ENCODE measurements at regions of chr1 and their contacts with region 1.

Region 1: DNA sequence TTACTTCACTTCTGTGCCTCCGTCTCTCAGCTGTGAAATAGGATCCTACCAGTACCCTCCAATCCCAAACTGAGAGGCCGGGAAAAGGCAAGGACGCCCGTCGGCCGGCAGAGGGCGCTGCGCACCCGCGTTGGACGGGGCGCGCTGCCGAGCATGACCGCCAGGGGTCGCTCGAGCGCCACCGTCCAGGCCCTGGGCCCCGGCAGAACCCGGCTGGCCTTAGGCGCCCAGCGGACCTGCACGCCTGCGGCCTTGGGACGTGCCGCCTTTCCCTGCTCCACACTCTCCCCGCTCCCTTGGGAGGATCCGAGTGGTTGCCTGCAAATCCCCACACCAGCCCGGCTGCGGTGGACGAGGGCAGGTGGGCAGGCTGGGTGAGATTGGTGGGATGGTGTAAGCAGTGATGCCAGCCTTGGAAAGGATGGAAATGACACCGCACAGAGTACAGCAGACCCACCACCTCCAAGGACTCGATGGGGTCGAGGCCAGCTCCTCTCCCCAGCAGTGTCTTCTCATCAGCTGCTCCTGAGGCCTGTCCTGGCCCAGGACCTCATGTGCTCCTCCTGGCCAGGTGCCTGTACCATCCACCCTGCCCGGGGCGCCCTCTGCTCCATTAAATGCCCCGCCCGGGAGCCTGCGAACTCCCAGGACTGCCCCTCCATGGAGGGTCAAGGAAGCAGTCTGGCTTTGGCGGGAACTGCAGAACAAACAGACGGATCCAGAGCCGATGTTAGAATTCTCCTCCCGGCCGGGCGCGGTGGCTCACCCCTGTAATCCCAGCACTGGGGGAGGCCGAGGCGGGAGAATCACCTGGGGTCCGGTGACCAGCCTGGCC is 47.4 kb upstream of the LBR start:
- DNase-seq: peak; percentile 81 to 85
- ATAC-seq: peak; percentile 92 to 96 (median 93)
- H3K4me3 ChIP-seq: no peak overlapping the region
- H3K4me3 Mint-ChIP-seq: no peak overlapping the region
- H3K27ac ChIP-seq: no peak overlapping the region
- H3K27ac Mint-ChIP-seq: peak overlapping the region; percentile 62 to 77
- H3K4me1 ChIP-seq: peaks cover 56% of the 10 kb centered on the region
- H3K4me1 Mint-ChIP-seq: peaks cover 35 to 48% of the 10 kb centered on the region in 2 donors
- H3K27me3 ChIP-seq: no peaks in the 10 kb centered on the region
- H3K27me3 Mint-ChIP-seq: no peaks in the 10 kb centered on the region
- CTCF ChIP-seq: peak; percentile 100

Region 2: GRCh38 chr1:225460737-225461562 is 14.3 kb before region 1 on chr1:
- intact Hi-C with region 1: no loop called
- DNase-seq: peak; percentile 71 to 81
- ATAC-seq: peak; percentile 89 to 95 (median 89)
- H3K4me3 ChIP-seq: no peak overlapping the region
- H3K4me3 Mint-ChIP-seq: peak overlapping the region; percentile 81
- H3K27ac ChIP-seq: peak overlapping the region; percentile 82
- H3K27ac Mint-ChIP-seq: peak overlapping the region; percentile 92 to 96
- H3K4me1 ChIP-seq: peaks cover 62% of the 10 kb centered on the region
- H3K4me1 Mint-ChIP-seq: peaks cover 70 to 87% of the 10 kb centered on the region in 2 donors
- H3K27me3 ChIP-seq: no peaks in the 10 kb centered on the region
- H3K27me3 Mint-ChIP-seq: no peaks in the 10 kb centered on the region
- CTCF ChIP-seq: no peak

Region 3: DNA sequence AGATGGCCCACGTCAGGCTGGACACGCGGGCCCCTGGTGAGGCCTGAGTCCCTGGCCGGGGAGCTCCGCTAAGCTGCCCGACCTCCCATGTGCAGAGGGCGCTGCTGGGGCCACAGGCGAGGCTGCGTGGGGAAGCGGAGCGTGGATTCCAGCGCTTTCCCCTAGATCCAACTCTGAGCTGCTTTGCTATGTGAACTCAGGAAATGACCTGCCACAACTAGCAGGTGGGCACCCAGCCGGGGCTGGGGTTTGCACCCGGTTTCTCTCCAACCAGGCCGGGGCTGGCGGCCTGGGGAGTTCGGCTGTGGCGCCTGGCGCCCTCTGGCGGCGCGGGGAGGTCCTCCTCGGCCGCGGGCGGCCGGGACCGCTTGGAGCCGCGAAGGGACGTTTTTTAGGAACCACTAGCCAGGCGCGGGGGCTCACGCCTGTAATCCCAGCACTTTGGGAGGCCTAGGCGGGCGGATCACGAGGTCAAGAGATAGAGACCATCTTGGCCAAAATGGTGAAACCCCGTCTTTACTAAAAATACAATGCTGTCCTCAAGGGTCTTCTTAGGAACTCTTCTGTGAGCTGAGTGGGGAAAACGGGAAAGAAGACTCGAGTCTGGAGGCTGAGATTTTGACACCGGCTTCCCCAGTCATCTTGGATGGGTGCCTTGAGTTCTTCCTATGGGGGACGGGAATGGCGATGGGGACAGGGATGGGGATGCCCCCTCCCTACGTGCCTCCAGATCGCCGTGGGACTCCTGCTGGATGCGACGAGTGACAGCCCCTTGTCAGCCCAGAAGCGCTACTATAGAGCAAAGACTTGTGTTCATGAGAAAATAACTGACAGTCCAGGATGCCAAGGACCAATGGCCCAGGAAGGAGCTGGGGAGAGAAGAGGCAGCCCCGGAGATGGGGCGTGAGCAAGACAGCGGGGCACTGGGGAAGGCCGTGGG is 436.3 kb after region 1 on chr1:
- intact Hi-C with region 1: loop called (anchors 2 kb)
- DNase-seq: peak; percentile 68 to 88
- ATAC-seq: peak; percentile 77 to 95 (median 93)
- H3K4me3 ChIP-seq: no peak overlapping the region
- H3K4me3 Mint-ChIP-seq: no peak overlapping the region
- H3K27ac ChIP-seq: no peak overlapping the region
- H3K27ac Mint-ChIP-seq: no peak overlapping the region
- H3K4me1 ChIP-seq: peaks cover 21% of the 10 kb centered on the region
- H3K4me1 Mint-ChIP-seq: peaks cover 22 to 25% of the 10 kb centered on the region in 2 donors
- H3K27me3 ChIP-seq: no peaks in the 10 kb centered on the region
- H3K27me3 Mint-ChIP-seq: no peaks in the 10 kb centered on the region
- CTCF ChIP-seq: peak; percentile 79

Measured in natural killer cell (primary cell).